WTC11 (cell line): ENCODE measurements at regions of chr9 and their contacts with region 1.

Region 1: GRCh38 chr9:120985810-120986222 is 59.2 kb upstream of the TRAF1 start:
- DNase-seq: no peak
- ATAC-seq: peak; percentile 78
- H3K4me3 Mint-ChIP-seq: no peak overlapping the region
- H3K27ac Mint-ChIP-seq: no peak overlapping the region
- H3K4me1 Mint-ChIP-seq: peaks cover 4% of the 10 kb centered on the region
- H3K27me3 Mint-ChIP-seq: no peaks in the 10 kb centered on the region; the same call in 1 of the 2 replicates
- CTCF ChIP-seq: peak; percentile 30; the same call in 1 of the 2 replicates

Region 2: GRCh38 chr9:120730661-120731514 is 254.9 kb before region 1 on chr9:
- CTCF ChIA-PET with region 1: interaction called, 17 read pairs
- POLR2A ChIA-PET with region 1: no interaction called
- DNase-seq: no peak
- ATAC-seq: peak; percentile 52
- H3K4me3 Mint-ChIP-seq: no peak overlapping the region
- H3K27ac Mint-ChIP-seq: no peak overlapping the region
- H3K4me1 Mint-ChIP-seq: peaks cover 5% of the 10 kb centered on the region; the same call in 1 of the 2 replicates
- H3K27me3 Mint-ChIP-seq: peaks cover 2% of the 10 kb centered on the region
- CTCF ChIP-seq: no peak

Region 3: GRCh38 chr9:120868676-120869359 is 117.0 kb before region 1 on chr9:
- CTCF ChIA-PET with region 1: interaction called, 11 read pairs
- POLR2A ChIA-PET with region 1: no interaction called
- DNase-seq: peak; percentile 98
- ATAC-seq: peak; percentile 90
- H3K4me3 Mint-ChIP-seq: peak overlapping the region; percentile 81
- H3K27ac Mint-ChIP-seq: peak overlapping the region; percentile 76
- H3K4me1 Mint-ChIP-seq: peaks cover 33% of the 10 kb centered on the region
- H3K27me3 Mint-ChIP-seq: no peaks in the 10 kb centered on the region
- CTCF ChIP-seq: no peak

Region 4: GRCh38 chr9:120936011-120936763 is 49.6 kb before region 1 on chr9:
- CTCF ChIA-PET with region 1: interaction called, 12 read pairs
- POLR2A ChIA-PET with region 1: no interaction called
- DNase-seq: peak; percentile 95
- ATAC-seq: peak; percentile 97
- H3K4me3 Mint-ChIP-seq: no peak overlapping the region
- H3K27ac Mint-ChIP-seq: no peak overlapping the region
- H3K4me1 Mint-ChIP-seq: peaks cover 11% of the 10 kb centered on the region
- H3K27me3 Mint-ChIP-seq: peaks cover 6% of the 10 kb centered on the region; the same call in 1 of the 2 replicates
- CTCF ChIP-seq: peak; percentile 73; the same call in 1 of the 2 replicates

Region 5: DNA sequence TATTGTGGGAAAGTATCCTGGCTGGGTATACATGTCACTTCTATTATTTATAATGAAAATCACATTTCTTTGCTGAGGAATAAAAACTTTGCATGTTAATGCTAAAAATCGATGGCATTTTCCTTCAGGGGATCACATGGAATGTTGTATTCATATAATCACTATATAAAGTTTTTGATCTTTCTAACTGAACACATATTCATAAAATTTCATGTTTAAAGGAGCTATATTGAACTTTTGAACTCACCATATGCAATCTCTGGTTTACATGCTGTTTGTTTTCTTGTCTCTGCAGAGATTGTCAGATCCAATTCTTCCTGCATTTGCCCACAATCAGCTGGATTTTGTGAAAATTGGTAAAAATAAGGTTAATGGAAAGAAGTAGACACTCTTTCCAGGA is 25.8 kb before region 1 on chr9:
- CTCF ChIA-PET with region 1: interaction called, 21 read pairs
- POLR2A ChIA-PET with region 1: no interaction called
- DNase-seq: no peak
- ATAC-seq: no peak
- H3K4me3 Mint-ChIP-seq: no peak overlapping the region
- H3K27ac Mint-ChIP-seq: no peak overlapping the region
- H3K4me1 Mint-ChIP-seq: peaks cover 13% of the 10 kb centered on the region
- H3K27me3 Mint-ChIP-seq: no peaks in the 10 kb centered on the region
- CTCF ChIP-seq: no peak

Region 6: DNA sequence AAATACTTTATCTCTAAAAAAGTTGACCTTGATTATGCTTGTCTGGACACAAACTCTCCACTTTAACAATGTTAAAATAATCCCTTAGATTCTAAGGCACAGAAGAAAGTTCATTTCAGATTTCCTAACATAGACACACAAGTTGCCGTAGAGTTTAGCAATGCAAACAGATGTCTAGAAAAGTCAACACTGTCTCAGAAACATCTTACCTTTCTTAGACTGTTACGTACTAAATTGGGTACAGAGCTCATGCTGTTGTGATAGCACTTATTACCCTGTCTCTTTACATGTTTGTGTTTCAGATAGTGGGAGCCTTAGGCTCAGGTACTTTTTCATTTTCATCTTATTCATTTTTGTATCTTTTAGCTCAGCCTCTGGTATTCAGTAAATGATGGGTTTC is 12.3 kb after region 1 on chr9:
- CTCF ChIA-PET with region 1: interaction called, 11 read pairs
- POLR2A ChIA-PET with region 1: no interaction called
- DNase-seq: no peak
- ATAC-seq: no peak
- H3K4me3 Mint-ChIP-seq: no peak overlapping the region
- H3K27ac Mint-ChIP-seq: no peak overlapping the region
- H3K4me1 Mint-ChIP-seq: 0 out of 2 replicates have a peak, but pooled peaks cover 6% of the 10 kb centered on the region
- H3K27me3 Mint-ChIP-seq: 0 out of 2 replicates have a peak, but pooled peaks cover 2% of the 10 kb centered on the region
- CTCF ChIP-seq: no peak

Region 7: DNA sequence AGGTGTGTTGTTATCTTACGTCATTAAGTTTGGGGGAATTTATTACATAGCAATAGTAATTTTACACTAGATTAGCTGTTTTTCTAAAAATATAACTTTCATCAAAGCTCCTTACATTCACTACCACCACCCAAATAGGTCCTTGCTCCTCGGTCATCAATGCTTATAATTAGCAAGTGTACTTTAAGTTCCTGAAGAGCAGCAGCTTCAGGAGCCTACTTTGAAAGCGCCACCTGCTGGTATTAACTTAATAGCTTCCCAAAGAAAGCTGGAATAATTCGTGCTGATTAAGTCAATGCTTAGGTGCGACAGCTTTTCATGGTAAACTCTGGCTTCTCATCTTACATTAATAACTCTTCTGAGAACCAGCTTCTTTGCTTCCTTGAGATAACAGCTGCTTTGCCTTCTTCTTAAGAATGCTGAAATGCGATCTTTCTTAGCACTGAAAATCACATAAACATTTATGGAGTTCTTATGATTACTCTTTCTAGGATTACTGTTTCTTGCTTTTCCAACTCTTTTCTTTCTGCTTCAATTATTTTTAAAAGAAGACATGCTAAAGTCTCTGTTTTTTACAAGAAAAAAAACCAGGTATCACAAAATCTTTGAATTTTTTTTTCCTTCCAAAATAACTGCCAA is 74.3 kb after region 1 on chr9:
- CTCF ChIA-PET with region 1: interaction called, 71 read pairs
- POLR2A ChIA-PET with region 1: no interaction called
- DNase-seq: no peak
- ATAC-seq: peak; percentile 18; the same call in 1 of the 2 replicates
- H3K4me3 Mint-ChIP-seq: no peak overlapping the region
- H3K27ac Mint-ChIP-seq: no peak overlapping the region
- H3K4me1 Mint-ChIP-seq: no peaks in the 10 kb centered on the region
- H3K27me3 Mint-ChIP-seq: peaks cover 7% of the 10 kb centered on the region; the same call in 1 of the 2 replicates
- CTCF ChIP-seq: peak; percentile 47